ENCODE measurements at regions of chr13 and their contacts with region 1.

Region 1: DNA sequence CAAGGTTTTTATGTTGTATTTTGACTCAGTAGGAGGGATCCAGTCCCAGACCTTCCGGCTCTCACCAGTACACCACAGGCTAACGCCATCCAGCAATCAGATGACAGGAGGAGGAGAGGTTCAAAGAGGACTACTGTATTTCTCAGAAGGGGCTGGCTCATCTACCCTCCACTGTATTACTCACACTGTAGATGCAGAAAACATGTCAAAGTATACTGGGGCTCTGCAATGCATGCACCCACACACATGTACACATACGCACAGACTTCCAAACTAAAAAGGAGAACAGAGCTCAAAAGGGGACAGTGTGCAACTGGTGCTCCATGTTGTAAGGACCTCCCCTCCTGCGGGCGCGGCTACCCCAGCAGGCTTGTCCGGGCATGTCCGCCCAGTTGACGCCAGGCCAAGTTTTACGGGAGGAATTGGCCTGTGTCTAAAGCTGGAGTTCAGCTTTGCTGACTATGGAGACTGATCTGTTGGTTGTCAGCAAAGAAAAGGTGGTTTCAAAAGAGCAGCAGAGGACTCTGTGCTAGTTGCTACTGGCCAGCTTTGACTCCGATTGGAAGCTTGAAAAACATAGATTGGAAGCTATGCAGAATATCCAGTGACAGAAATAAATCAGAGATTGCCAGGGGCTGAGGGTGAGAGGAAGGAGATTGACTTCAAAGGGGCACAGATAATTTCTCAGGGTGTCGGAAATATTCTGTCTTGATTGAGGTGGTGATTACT is 314.2 kb downstream of the DLEU7 start:
- DNase-seq: peak; percentile 90
- H3K4me3 ChIP-seq: no peak overlapping the region
- H3K27ac ChIP-seq: peak overlapping the region; percentile 27
- H3K4me1 ChIP-seq: peaks cover 8% of the 10 kb centered on the region
- H3K27me3 ChIP-seq: no peaks in the 10 kb centered on the region
- CTCF ChIP-seq: no peak

Region 2: DNA sequence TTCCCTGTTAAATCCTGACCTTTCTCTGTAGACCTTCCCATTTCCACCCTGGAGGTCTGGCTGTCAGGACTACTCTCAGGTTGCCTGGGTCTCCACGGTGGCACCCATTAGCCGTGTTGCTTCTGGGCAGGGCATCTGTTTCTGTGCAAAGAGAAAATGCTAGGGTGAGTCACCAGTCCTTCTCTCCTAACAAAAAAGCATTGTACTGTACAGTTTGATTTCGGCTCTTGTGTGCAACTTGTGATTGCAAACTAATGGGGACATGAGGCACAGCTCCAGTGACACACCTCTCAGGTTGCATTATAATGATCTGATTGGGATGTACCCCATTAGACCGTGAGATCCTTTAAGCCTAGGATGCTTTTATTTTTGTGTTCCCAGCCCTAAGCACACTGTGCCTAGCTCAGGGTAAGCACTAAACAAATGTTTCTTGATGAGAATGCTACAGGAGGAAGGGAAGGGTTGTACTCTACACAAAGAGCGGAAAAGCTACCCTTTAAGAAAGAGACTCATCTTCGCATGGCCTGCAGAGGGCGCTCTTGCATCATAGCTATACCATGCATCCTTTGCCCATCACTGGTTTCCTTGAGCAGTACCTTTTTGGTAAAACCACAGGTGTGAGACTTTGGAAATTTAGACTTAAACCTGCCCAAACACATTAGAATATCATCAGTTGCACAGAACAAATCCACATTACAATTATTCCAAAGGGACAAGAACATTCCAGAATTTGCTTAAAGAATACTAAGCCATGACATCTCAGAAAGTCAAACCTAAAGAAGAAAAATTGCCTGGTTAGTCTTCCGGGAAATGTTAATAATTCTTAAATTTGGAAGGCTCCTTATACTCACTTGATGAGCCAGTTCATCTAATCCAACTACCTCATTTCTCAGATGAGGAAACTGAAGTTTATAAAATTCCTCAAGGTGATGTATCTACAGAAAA is 552.7 kb before region 1 on chr13:
- intact Hi-C with region 1: loop called (anchors 10 kb)
- DNase-seq: peak; percentile 79
- H3K4me3 ChIP-seq: no peak overlapping the region
- H3K27ac ChIP-seq: no peak overlapping the region
- H3K4me1 ChIP-seq: no peaks in the 10 kb centered on the region
- H3K27me3 ChIP-seq: no peaks in the 10 kb centered on the region
- CTCF ChIP-seq: peak; percentile 84

Region 3: DNA sequence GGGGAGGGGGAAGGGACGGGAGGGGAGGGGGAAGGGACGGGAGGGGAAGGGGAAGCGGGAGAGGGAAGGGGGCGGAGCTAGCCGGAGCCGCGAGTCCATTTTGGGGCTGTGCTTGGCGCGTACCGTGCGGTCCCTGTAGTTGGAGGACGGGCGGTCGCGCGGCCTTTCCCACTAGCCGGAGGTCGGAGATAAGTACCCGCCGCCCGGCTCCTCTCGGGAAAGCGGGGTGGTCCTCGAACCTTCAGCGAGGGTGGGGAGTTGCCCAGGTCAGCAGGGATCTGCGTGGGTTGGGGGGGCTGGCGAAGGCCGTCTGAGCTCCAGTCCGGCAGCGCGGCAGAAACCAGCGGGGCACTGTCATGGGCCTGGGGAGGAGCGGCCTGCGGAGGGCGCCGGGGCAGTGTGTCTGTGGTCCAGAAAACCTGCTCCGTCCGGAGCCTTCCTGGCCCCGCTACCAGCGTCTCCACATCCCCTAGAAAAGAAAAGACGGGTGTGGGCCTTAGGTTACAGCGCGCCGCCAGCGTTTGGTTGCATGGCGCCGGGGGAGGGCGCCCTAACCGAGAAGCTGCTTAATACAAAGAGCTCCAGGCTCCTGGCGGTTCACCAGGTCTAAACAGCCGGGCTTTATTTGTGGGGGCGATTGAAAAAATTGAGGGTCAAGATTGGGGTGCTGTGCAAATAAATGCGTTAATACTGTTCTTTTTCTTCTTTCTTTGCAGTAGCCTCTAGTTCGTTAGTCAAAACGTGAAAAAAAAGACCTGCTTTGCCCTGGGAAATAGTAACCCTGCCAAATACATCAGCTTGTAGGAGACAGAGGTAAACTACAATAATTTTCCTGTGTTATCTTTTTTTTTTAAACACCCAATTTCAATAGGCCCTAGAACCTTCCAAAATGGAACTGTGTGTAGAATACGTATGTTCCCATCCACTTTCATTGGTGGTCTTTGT is 532.1 kb before region 1 on chr13 and contains the start of gene TRIM13:
- intact Hi-C with region 1: loop called (anchors 10 kb)
- DNase-seq: peak; percentile 90
- H3K4me3 ChIP-seq: peak within 1 kb of the TSS; percentile 71
- H3K27ac ChIP-seq: peak within 1 kb of the TSS; percentile 99
- H3K4me1 ChIP-seq: peaks cover 18% of the 10 kb centered on the region
- H3K27me3 ChIP-seq: no peaks in the 10 kb centered on the region
- CTCF ChIP-seq: peak; percentile 66
- total RNA-seq, gene TRIM13: 21.7 to 35.0 TPM

Region 4: DNA sequence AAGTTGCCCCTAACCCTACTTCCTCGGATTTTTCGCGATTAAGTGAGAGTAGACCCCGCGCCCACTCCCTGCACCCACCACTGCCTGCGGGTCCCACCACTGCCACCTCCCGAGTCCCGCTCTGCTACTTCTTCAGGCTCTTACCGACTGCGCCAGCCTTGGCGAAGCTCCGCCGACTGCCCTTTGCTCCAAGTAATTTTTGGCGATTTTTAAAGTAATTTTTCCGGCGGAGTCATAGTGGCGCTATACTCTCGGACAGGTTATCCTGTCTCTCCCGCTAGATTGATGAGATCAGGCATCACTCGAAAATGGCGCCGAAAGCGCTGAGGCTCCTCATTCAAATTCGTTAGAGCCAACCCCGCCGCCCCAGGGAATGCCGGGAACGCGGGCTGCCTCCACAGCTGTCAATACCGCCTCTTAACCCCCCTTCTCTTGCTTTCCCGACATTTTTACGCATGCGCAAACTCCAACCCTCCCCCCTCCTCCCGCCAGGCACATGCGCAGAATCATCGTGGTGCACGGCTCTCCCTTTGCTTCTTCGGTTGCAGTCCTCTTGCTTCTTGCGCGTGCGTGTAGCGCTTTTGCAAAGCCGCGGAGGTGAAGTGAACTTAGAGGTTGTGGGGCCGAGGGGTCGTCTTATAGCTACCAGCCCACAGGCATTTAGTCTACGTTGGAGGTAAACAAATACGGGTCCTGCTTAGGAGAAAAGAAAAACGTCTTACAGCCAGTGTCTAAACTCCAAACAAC is 447.5 kb before region 1 on chr13:
- intact Hi-C with region 1: loop called (anchors 5 kb)
- DNase-seq: peak; percentile 99
- H3K4me3 ChIP-seq: peak overlapping the region; percentile 70
- H3K27ac ChIP-seq: peak overlapping the region; percentile 89
- H3K4me1 ChIP-seq: no peaks in the 10 kb centered on the region
- H3K27me3 ChIP-seq: no peaks in the 10 kb centered on the region
- CTCF ChIP-seq: no peak

Region 5: DNA sequence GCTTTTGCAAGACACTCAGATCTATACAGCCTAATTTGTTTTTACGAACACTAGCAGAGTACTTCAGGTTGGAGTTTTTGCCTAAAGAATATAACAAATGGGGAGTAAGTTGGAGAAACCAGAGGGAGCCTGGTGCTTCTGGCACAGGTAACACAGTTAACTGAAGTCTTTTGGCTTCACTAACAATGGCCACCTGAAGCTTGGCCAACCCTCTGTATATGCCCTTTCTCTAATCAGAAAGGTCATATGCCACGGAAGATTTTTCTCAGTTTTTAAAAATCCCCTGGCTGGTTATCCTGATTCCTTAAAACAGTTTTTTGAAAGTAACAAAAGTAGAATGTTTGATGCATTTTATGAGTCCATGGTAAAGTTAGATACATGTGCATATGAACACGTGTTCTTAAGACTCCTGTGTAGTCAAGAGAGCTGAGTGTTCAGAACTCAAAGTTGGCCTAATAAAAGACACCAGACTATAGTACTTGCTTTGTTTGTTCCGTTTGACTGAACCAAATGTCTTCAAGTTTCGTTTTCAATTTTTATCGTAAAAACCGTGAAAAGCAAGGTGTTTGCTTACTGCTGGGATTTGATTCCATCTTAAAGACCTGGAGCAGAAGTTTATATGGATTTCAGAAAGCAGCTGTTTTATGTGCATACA is 376.5 kb before region 1 on chr13:
- intact Hi-C with region 1: loop called (anchors 10 kb)
- DNase-seq: no peak
- H3K4me3 ChIP-seq: no peak overlapping the region
- H3K27ac ChIP-seq: no peak overlapping the region
- H3K4me1 ChIP-seq: no peaks in the 10 kb centered on the region
- H3K27me3 ChIP-seq: no peaks in the 10 kb centered on the region
- CTCF ChIP-seq: no peak

Region 6: DNA sequence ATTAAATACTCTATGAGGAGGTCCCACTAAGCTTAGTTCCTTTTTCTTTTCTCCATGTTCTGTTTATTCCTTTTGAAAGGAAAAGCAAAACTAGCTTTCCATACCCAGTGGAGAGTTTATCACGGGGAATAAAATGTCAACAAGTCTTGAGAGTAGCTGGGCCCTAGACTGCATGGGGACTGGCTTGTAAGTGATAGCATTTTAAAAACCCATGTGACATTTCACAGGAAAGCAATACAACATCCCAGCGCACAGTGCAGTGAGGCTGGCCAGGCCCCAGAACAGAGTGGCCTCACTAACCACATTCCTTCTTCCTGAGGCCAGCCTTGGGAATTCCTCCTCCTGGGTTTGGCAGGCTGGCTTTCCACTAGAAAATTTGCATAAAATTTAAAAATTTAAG is 164.4 kb after region 1 on chr13:
- intact Hi-C with region 1: no loop called
- DNase-seq: no peak
- H3K4me3 ChIP-seq: no peak overlapping the region
- H3K27ac ChIP-seq: no peak overlapping the region
- H3K4me1 ChIP-seq: no peaks in the 10 kb centered on the region
- H3K27me3 ChIP-seq: no peaks in the 10 kb centered on the region
- CTCF ChIP-seq: no peak

Measured in colonic mucosa (tissue), 4 donors.